Mammary epithelial cell (primary cell): ENCODE measurements at regions of chrX and their contacts with region 1.

Region 1: DNA sequence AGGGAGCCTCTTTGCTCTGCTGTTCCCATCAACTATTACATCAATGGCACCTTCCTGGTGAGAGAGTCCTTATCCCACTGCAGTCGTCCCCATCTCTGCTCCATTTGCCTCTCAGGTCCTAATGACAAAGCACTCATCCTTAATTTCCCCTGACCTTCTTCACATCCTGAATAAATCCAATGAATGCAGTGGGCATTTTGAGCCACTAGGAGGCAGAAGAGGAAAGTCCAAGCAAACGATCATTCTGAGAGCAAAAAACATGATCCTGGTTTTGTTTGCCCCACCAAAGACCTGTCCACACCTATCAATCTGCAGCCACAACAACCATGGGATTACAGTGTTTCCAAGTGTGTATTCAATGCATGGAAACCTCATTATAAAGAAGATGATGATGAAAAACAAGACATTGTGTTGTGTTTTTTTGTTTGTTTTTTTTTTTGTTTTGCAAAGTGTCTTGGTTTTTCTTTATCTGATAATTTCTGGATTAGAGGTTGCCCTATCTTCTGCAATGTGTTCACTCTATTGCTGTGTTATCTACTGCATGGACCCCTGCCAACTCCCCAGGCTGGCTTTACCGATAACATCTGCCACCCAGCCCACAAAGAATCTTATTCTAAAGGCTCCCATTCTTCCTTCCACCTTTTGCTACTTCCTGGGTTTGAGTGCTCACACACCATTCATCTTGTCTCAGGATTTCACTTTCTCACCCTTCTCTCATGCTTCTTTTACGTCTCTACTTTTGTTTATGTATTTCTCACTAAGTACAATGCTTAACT is 207.2 kb downstream of the NLGN4X start:
- DNase-seq: peak; percentile 37
- H3K4me3 ChIP-seq: no peak overlapping the region
- H3K27ac ChIP-seq: no peak overlapping the region
- H3K4me1 ChIP-seq: peaks cover 20% of the 10 kb centered on the region
- H3K27me3 ChIP-seq: no peaks in the 10 kb centered on the region
- CTCF ChIP-seq: peak; percentile 81 to 90

Region 2: DNA sequence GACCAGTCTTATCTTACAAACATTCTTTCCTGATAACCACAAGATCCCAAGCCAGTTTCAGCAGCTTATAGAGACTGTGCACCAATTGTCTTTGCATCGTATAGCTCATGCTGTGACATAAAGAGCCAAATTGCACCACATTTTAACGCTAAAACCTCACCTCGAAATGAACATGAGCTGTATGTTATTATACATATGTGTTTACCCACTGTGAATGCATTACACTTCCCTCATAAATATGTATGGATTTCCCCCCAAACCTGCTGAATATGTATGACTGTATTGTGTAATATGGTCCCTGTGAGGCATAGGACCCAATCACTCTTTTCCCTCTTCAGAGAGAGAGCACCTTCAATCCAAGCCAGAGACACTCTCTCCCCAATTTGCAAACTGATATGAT is 485.2 kb before region 1 on chrX:
- CTCF ChIA-PET with region 1: no interaction called
- dilution Hi-C with region 1: no loop called
- in situ Hi-C with region 1: no loop called
- intact Hi-C with region 1: no loop called
- DNase-seq: no peak
- H3K4me3 ChIP-seq: no peak overlapping the region
- H3K27ac ChIP-seq: no peak overlapping the region
- H3K4me1 ChIP-seq: no peaks in the 10 kb centered on the region
- H3K27me3 ChIP-seq: no peaks in the 10 kb centered on the region
- CTCF ChIP-seq: no peak

Region 3: DNA sequence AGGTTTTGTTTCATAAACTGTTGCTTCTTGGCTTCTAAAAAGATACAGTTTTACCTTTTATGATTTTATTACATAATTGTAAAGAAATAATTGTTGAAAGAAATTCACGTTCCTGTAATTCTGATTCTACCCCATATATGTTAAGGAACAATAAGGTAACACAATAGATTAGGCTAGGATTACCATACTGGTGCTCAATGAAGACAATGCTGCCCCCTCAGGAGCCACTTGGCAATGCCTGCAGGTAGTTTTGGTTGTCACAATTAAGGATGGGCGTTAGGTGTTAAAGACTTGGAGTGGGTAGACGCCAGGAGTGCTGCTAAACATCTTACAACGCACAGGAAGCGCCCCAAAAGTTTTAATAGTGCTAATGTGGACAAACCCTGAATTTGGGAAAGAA is 74.0 kb after region 1 on chrX:
- CTCF ChIA-PET with region 1: no interaction called
- dilution Hi-C with region 1: no loop called
- in situ Hi-C with region 1: no loop called
- intact Hi-C with region 1: loop called (anchors 2 kb)
- DNase-seq: no peak
- H3K4me3 ChIP-seq: no peak overlapping the region
- H3K27ac ChIP-seq: no peak overlapping the region
- H3K4me1 ChIP-seq: no peaks in the 10 kb centered on the region
- H3K27me3 ChIP-seq: no peaks in the 10 kb centered on the region
- CTCF ChIP-seq: peak; percentile 26 to 44

Region 4: DNA sequence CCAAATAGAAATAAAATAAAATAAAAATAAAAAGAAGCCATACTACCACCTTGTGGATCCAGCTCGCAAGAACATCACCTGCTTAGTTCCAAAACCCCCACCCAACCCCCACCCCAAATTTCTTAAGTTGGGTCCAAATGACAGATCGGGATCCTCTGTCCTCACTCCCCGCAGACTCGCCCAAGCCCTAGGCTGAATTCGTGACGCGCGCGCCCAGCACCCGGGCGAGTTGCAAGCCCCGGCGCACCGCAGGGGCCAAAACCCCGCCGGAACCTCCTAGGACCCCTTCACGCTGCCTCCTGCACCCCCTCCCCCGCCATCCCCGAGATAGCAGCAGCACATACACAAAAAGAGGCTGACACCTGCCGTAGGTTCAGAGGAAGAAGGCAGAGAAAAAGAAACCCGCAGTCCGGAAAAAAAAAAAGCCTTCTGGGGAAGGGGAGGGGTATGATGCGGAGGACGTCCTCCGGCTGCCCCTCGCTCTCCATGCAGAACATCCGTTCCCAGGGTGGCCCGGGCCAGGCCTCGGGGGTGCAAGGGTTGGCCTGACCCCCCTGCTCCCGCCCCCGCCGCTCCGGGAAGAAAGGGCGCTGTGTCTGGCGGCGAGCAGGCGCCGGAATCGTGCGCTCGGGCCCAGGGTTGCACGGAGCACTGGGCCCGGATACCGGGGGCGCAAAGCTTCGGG is 204.5 kb after region 1 on chrX:
- CTCF ChIA-PET with region 1: no interaction called
- dilution Hi-C with region 1: no loop called
- in situ Hi-C with region 1: loop called in 1 of 2 experiments (anchors 10 kb)
- intact Hi-C with region 1: loop called (anchors 1 kb)
- DNase-seq: peak; percentile 3
- H3K4me3 ChIP-seq: peak overlapping the region; percentile 30 to 52 (median 46)
- H3K27ac ChIP-seq: no peak overlapping the region
- H3K4me1 ChIP-seq: peaks cover 5% of the 10 kb centered on the region
- H3K27me3 ChIP-seq: peaks cover 17% of the 10 kb centered on the region
- CTCF ChIP-seq: no peak

Region 5: GRCh38 chrX:7706032-7706431 is 1684.5 kb after region 1 on chrX:
- CTCF ChIA-PET with region 1: no interaction called
- dilution Hi-C with region 1: no loop called
- in situ Hi-C with region 1: no loop called
- intact Hi-C with region 1: loop called (anchors 10 kb)
- DNase-seq: no peak
- H3K4me3 ChIP-seq: no peak overlapping the region
- H3K27ac ChIP-seq: no peak overlapping the region
- H3K4me1 ChIP-seq: peaks cover 2% of the 10 kb centered on the region
- H3K27me3 ChIP-seq: no peaks in the 10 kb centered on the region
- CTCF ChIP-seq: peak; percentile 17 to 56